ENCODE measurements at regions of chr20 and their contacts with region 1.

Region 1: GRCh38 chr20:38221119-38221589 is 39.4 kb downstream of the KIAA1755 start:
- DNase-seq: peak; percentile 35 to 63 (median 49)
- H3K4me3 ChIP-seq: no peak overlapping the region
- H3K4me3 Mint-ChIP-seq: peak overlapping the region in 1 of 8 donors; percentile 36
- H3K27ac ChIP-seq: no peak overlapping the region
- H3K27ac Mint-ChIP-seq: peak overlapping the region in 1 of 7 donors; percentile 43
- H3K4me1 ChIP-seq: no peaks in the 10 kb centered on the region
- H3K4me1 Mint-ChIP-seq: peaks cover 0 to 6% (median 1%) of the 10 kb centered on the region in 4 donors
- H3K27me3 ChIP-seq: no peaks in the 10 kb centered on the region
- H3K27me3 Mint-ChIP-seq: peaks cover 4 to 7% of the 10 kb centered on the region in 2 donors

Region 2: GRCh38 chr20:37564388-37565133 is 656.6 kb before region 1 on chr20:
- CTCF ChIA-PET with region 1: interaction called, 20 read pairs
- POLR2A ChIA-PET with region 1: no interaction called
- intact Hi-C with region 1: no loop called
- DNase-seq: peak in 4 of 5 donors; percentile 9 to 34 (median 14)
- H3K4me3 ChIP-seq: no peak overlapping the region
- H3K4me3 Mint-ChIP-seq: peak overlapping the region in 1 of 8 donors; percentile 13
- H3K27ac ChIP-seq: no peak overlapping the region
- H3K27ac Mint-ChIP-seq: no peak overlapping the region
- H3K4me1 ChIP-seq: no peaks in the 10 kb centered on the region
- H3K4me1 Mint-ChIP-seq: no peaks in the 10 kb centered on the region
- H3K27me3 ChIP-seq: peaks cover 16% of the 10 kb centered on the region
- H3K27me3 Mint-ChIP-seq: peaks cover 29 to 38% of the 10 kb centered on the region in 2 donors

Region 3: DNA sequence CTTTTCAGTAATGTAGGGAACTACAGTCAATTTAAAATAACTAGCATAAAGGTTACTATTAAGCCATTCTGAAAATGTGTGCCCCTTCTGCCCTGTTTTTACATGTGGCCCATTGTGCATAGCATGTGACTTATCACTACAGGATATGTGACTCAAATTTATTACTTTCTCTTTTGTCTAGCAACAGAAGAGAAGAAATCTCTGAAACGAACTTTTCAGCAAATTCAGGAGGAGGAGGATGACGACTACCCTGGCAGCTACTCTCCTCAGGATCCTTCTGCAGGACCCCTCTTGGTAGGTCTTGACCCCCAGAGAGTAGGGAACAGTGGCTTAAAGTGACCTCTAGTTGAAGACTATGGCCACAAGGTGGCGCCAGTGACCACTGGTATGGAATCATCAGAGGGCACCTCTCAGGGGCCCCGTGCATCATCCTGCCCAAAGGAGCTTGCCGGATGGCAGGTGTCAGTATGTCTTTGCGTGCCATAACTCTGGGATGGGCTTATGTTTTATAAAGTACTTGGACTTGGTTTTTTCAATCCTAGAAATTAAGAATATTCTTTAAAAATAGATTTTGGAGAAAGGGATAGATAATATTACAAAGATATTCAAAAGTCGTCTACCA is 163.7 kb before region 1 on chr20:
- CTCF ChIA-PET with region 1: interaction called, 62 read pairs
- POLR2A ChIA-PET with region 1: interaction called, 4 read pairs
- intact Hi-C with region 1: no loop called
- DNase-seq: peak; percentile 63 to 74 (median 66)
- H3K4me3 ChIP-seq: no peak overlapping the region
- H3K4me3 Mint-ChIP-seq: peak overlapping the region in 1 of 8 donors; percentile 38
- H3K27ac ChIP-seq: no peak overlapping the region
- H3K27ac Mint-ChIP-seq: peak overlapping the region in 5 of 7 donors; percentile 19 to 72 (median 32)
- H3K4me1 ChIP-seq: no peaks in the 10 kb centered on the region
- H3K4me1 Mint-ChIP-seq: peaks cover 12 to 26% (median 25%) of the 10 kb centered on the region in 4 donors
- H3K27me3 ChIP-seq: no peaks in the 10 kb centered on the region
- H3K27me3 Mint-ChIP-seq: no peaks in the 10 kb centered on the region

Region 4: GRCh38 chr20:38073307-38074071 is 147.7 kb before region 1 on chr20:
- CTCF ChIA-PET with region 1: interaction called, 16 read pairs
- POLR2A ChIA-PET with region 1: interaction called, 3 read pairs
- intact Hi-C with region 1: loop called (anchors 1 kb)
- DNase-seq: peak; percentile 17 to 39 (median 33)
- H3K4me3 ChIP-seq: no peak overlapping the region
- H3K4me3 Mint-ChIP-seq: no peak overlapping the region
- H3K27ac ChIP-seq: no peak overlapping the region
- H3K27ac Mint-ChIP-seq: peak overlapping the region in 6 of 7 donors; percentile 7 to 64 (median 37)
- H3K4me1 ChIP-seq: no peaks in the 10 kb centered on the region
- H3K4me1 Mint-ChIP-seq: peaks cover 14 to 23% (median 20%) of the 10 kb centered on the region in 4 donors
- H3K27me3 ChIP-seq: no peaks in the 10 kb centered on the region
- H3K27me3 Mint-ChIP-seq: no peaks in the 10 kb centered on the region

Region 5: GRCh38 chr20:38210741-38211140 is 10.4 kb before region 1 on chr20:
- CTCF ChIA-PET with region 1: interaction called, 41 read pairs
- POLR2A ChIA-PET with region 1: no interaction called
- intact Hi-C with region 1: no loop called
- DNase-seq: no peak
- H3K4me3 ChIP-seq: no peak overlapping the region
- H3K4me3 Mint-ChIP-seq: no peak overlapping the region
- H3K27ac ChIP-seq: no peak overlapping the region
- H3K27ac Mint-ChIP-seq: no peak overlapping the region
- H3K4me1 ChIP-seq: no peaks in the 10 kb centered on the region
- H3K4me1 Mint-ChIP-seq: no peaks in the 10 kb centered on the region
- H3K27me3 ChIP-seq: no peaks in the 10 kb centered on the region
- H3K27me3 Mint-ChIP-seq: peaks cover 0 to 10% of the 10 kb centered on the region in 2 donors

Region 6: DNA sequence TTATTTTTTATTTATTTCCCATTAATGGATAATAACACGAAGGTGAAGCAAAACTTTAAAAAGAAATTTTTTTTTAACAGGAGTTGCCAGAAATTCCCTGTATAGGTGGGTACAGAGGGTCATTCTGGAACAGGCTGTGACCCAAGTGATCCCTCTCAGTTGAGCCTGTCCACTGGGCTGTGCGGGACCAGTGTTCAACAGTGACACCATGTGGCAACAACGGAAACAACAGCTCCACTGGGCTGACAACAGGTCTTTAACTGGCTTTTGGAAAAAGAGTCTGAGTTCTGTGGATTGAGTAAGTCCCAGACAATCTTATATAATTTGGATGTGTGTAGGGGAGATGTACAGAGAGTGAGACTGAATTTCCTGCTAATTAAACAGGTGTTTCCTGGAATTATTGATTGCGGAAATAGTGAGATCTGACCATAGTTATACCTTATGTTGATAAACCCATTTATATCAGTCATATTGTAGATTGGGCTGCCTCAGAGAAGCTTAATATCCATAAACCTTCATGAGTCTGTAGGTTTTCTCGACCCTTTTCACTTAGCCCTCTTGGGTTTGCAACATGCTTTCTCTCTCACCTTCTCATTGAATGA is 21.8 kb after region 1 on chr20:
- CTCF ChIA-PET with region 1: interaction called, 17 read pairs
- POLR2A ChIA-PET with region 1: no interaction called
- intact Hi-C with region 1: no loop called
- DNase-seq: no peak
- H3K4me3 ChIP-seq: no peak overlapping the region
- H3K4me3 Mint-ChIP-seq: no peak overlapping the region
- H3K27ac ChIP-seq: no peak overlapping the region
- H3K27ac Mint-ChIP-seq: no peak overlapping the region
- H3K4me1 ChIP-seq: no peaks in the 10 kb centered on the region
- H3K4me1 Mint-ChIP-seq: no peaks in the 10 kb centered on the region
- H3K27me3 ChIP-seq: no peaks in the 10 kb centered on the region
- H3K27me3 Mint-ChIP-seq: peaks cover 10 to 14% of the 10 kb centered on the region in 2 donors

Region 7: GRCh38 chr20:38985603-38986170 is 764.5 kb after region 1 on chr20:
- CTCF ChIA-PET with region 1: no interaction called
- POLR2A ChIA-PET with region 1: no interaction called
- intact Hi-C with region 1: no loop called
- DNase-seq: no peak
- H3K4me3 ChIP-seq: no peak overlapping the region
- H3K4me3 Mint-ChIP-seq: no peak overlapping the region
- H3K27ac ChIP-seq: no peak overlapping the region
- H3K27ac Mint-ChIP-seq: peak overlapping the region in 1 of 7 donors; percentile 22
- H3K4me1 ChIP-seq: no peaks in the 10 kb centered on the region
- H3K4me1 Mint-ChIP-seq: peaks cover 0 to 13% (median 7%) of the 10 kb centered on the region in 4 donors
- H3K27me3 ChIP-seq: no peaks in the 10 kb centered on the region
- H3K27me3 Mint-ChIP-seq: no peaks in the 10 kb centered on the region